ENCODE measurements at regions of chrX and their contacts with region 1.

Region 1: GRCh38 chrX:120629667-120630537 is at the start of gene C1GALT1C1:
- DNase-seq: peak; percentile 80 to 96 (median 89)
- ATAC-seq: peak; percentile 91
- H3K4me3 ChIP-seq: peak within 1 kb of the TSS; percentile 84 to 96
- H3K4me3 Mint-ChIP-seq: peak within 1 kb of the TSS; percentile 90
- H3K27ac ChIP-seq: peak within 1 kb of the TSS; percentile 95 to 96
- H3K27ac Mint-ChIP-seq: peak within 1 kb of the TSS; percentile 97
- H3K4me1 ChIP-seq: peaks cover 13% of the 10 kb centered on the region
- H3K4me1 Mint-ChIP-seq: peaks cover 23% of the 10 kb centered on the region
- H3K27me3 ChIP-seq: no peaks in the 10 kb centered on the region
- H3K27me3 Mint-ChIP-seq: no peaks in the 10 kb centered on the region
- CTCF ChIP-seq: no peak
- total RNA-seq, gene C1GALT1C1: 1.1 to 1.9 TPM

Region 2: DNA sequence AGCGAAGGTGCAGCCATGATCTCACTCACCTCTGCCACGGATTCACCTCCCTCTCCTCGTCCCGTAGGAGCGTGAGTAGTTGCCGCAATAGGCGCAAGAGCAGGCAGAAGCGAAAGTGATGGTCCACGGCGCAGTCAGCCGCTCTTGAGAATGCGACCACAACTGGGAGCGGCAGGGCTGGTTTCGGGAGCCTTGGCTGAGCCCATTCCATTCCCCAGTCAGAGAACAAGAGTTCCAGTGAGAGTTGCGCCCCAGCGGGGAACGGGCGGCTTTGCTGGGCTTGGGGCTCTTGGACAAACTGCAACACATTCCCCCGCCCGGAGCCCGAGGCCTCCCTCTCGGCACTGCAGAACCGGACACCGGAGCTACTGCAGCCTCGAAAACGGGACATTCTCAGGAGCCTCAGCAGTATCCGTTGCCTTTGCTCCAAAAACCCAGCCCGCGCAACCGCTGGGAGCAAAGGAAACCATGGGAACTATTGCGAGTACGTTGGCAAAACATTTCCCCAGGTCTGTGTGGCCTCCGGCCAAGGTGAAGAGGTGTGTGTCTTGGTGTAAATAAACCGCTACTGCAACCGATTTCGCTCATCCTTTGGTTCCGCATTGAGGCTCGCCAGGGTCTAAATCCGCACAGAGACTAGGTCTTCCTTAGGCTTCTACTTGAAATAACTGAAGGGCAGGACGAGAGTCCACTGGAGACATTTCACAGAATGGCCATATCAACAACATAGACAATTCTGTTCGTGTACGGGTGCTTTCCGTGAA is 385.0 kb before region 1 on chrX:
- CTCF ChIA-PET with region 1: no interaction called
- POLR2A ChIA-PET with region 1: no interaction called
- intact Hi-C with region 1: loop called in 1 of 2 experiments (anchors 10 kb)
- DNase-seq: peak; percentile 28 to 77 (median 59)
- ATAC-seq: peak; percentile 88
- H3K4me3 ChIP-seq: peak overlapping the region; percentile 87 to 90
- H3K4me3 Mint-ChIP-seq: peak overlapping the region; percentile 98
- H3K27ac ChIP-seq: peak overlapping the region; percentile 73 to 90
- H3K27ac Mint-ChIP-seq: peak overlapping the region; percentile 93
- H3K4me1 ChIP-seq: peaks cover 15% of the 10 kb centered on the region
- H3K4me1 Mint-ChIP-seq: peaks cover 26% of the 10 kb centered on the region
- H3K27me3 ChIP-seq: no peaks in the 10 kb centered on the region
- H3K27me3 Mint-ChIP-seq: peaks cover 2% of the 10 kb centered on the region
- CTCF ChIP-seq: no peak

Region 3: DNA sequence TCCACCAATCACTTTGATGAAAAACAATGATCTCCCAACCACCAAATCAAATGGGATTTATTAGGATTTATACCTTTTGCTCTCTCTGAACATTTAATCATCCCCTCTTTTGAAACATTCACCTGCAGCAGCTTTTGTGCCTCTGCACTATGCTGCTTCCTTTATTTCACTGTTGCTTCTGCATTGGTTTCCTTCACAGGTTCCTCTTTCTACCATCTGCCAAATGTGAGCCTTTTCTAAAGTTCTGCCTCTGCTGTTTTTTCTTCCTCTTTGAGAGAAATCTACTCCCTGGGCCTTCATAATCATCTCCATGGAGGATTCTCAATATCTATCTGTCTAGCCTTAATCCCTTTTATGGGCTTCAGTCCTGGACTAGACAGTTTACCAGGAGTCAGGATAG is 93.8 kb before region 1 on chrX:
- CTCF ChIA-PET with region 1: no interaction called
- POLR2A ChIA-PET with region 1: no interaction called
- intact Hi-C with region 1: no loop called
- DNase-seq: no peak
- ATAC-seq: no peak
- H3K4me3 ChIP-seq: no peak overlapping the region
- H3K4me3 Mint-ChIP-seq: no peak overlapping the region
- H3K27ac ChIP-seq: no peak overlapping the region
- H3K27ac Mint-ChIP-seq: peak overlapping the region; percentile 60
- H3K4me1 ChIP-seq: no peaks in the 10 kb centered on the region
- H3K4me1 Mint-ChIP-seq: no peaks in the 10 kb centered on the region
- H3K27me3 ChIP-seq: no peaks in the 10 kb centered on the region
- H3K27me3 Mint-ChIP-seq: no peaks in the 10 kb centered on the region
- CTCF ChIP-seq: no peak

Region 4: GRCh38 chrX:120603707-120604360 is 26.1 kb before region 1 on chrX and contains the start of gene MCTS1:
- CTCF ChIA-PET with region 1: interaction called, 3 read pairs
- POLR2A ChIA-PET with region 1: interaction called, 3 read pairs
- intact Hi-C with region 1: loop called (anchors 1 kb)
- DNase-seq: peak; percentile 52 to 93 (median 71)
- ATAC-seq: peak; percentile 87
- H3K4me3 ChIP-seq: peak within 1 kb of the TSS; percentile 76 to 91
- H3K4me3 Mint-ChIP-seq: peak within 1 kb of the TSS; percentile 95
- H3K27ac ChIP-seq: peak within 1 kb of the TSS; percentile 87 to 92
- H3K27ac Mint-ChIP-seq: peak within 1 kb of the TSS; percentile 97
- H3K4me1 ChIP-seq: peaks cover 15% of the 10 kb centered on the region
- H3K4me1 Mint-ChIP-seq: peaks cover 15% of the 10 kb centered on the region
- H3K27me3 ChIP-seq: no peaks in the 10 kb centered on the region
- H3K27me3 Mint-ChIP-seq: no peaks in the 10 kb centered on the region
- CTCF ChIP-seq: no peak
- total RNA-seq, gene MCTS1: 7.0 to 9.2 TPM

Region 5: GRCh38 chrX:120653000-120653399 is 23.1 kb after region 1 on chrX:
- CTCF ChIA-PET with region 1: no interaction called
- POLR2A ChIA-PET with region 1: no interaction called
- intact Hi-C with region 1: no loop called
- DNase-seq: no peak
- ATAC-seq: no peak
- H3K4me3 ChIP-seq: no peak overlapping the region
- H3K4me3 Mint-ChIP-seq: no peak overlapping the region
- H3K27ac ChIP-seq: no peak overlapping the region
- H3K27ac Mint-ChIP-seq: no peak overlapping the region
- H3K4me1 ChIP-seq: no peaks in the 10 kb centered on the region
- H3K4me1 Mint-ChIP-seq: no peaks in the 10 kb centered on the region
- H3K27me3 ChIP-seq: no peaks in the 10 kb centered on the region
- H3K27me3 Mint-ChIP-seq: no peaks in the 10 kb centered on the region
- CTCF ChIP-seq: no peak

Region 6: GRCh38 chrX:120697053-120697452 is 67.2 kb after region 1 on chrX:
- CTCF ChIA-PET with region 1: no interaction called
- POLR2A ChIA-PET with region 1: no interaction called
- intact Hi-C with region 1: loop called in 1 of 2 experiments (anchors 5 kb)
- DNase-seq: peak in 6 of 9 experiments; percentile 0 to 81 (median 38)
- ATAC-seq: peak; percentile 94
- H3K4me3 ChIP-seq: no peak overlapping the region
- H3K4me3 Mint-ChIP-seq: peak overlapping the region; percentile 40
- H3K27ac ChIP-seq: peak overlapping the region in 1 of 2 experiments; percentile 25
- H3K27ac Mint-ChIP-seq: peak overlapping the region; percentile 97
- H3K4me1 ChIP-seq: peaks cover 23% of the 10 kb centered on the region
- H3K4me1 Mint-ChIP-seq: peaks cover 16% of the 10 kb centered on the region
- H3K27me3 ChIP-seq: no peaks in the 10 kb centered on the region
- H3K27me3 Mint-ChIP-seq: no peaks in the 10 kb centered on the region
- CTCF ChIP-seq: no peak

Region 7: DNA sequence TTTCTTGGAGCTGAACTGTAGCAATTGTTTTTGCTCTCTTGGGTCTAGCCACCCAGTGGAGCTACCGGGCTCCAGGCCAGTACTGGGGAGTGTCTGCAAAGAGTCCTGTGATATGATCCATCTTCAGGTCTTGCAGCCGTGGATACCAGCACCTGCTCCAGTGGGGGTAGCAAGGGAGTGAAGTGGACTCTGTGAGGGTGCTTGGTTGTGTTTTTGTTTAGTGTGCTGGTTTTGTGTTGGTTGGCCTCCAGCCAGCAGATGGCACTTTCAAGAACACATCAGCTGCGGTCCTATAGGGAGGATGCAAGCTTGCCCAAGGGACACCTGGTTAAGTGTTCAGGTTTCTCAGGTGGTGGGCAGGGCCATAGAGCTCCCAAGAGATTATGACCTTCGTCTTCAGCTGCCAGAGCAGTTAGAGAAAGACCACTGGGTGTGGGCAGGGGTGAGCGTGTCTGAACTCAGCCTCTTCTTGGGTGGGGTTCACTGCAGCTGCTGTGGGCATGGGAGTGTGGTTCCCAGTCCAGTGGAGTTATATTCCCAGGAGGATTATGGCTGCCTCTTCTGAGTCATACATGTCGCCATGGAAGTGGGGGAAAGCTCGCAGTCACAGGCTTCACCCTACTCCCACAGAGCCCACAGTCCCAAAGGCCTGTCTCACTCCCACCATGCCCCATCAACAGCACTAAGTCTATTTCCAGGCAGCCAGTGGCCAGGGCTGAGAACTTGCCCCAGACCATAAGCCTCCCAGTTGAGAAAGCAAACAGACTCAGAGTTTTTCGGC is 1229.2 kb after region 1 on chrX:
- CTCF ChIA-PET with region 1: no interaction called
- POLR2A ChIA-PET with region 1: no interaction called
- intact Hi-C with region 1: no loop called
- DNase-seq: no peak
- ATAC-seq: no peak
- H3K4me3 ChIP-seq: no peak overlapping the region
- H3K4me3 Mint-ChIP-seq: no peak overlapping the region
- H3K27ac ChIP-seq: no peak overlapping the region
- H3K27ac Mint-ChIP-seq: no peak overlapping the region
- H3K4me1 ChIP-seq: no peaks in the 10 kb centered on the region
- H3K4me1 Mint-ChIP-seq: no peaks in the 10 kb centered on the region
- H3K27me3 ChIP-seq: no peaks in the 10 kb centered on the region
- H3K27me3 Mint-ChIP-seq: no peaks in the 10 kb centered on the region
- CTCF ChIP-seq: no peak

Measured in CD8-positive, alpha-beta T cell (primary cell).